HEK293 (cell line): ENCODE measurements at regions of chr11 and their contacts with region 1.

Region 1: GRCh38 chr11:33987975-33988580 is 63.5 kb upstream of the CAPRIN1 start:
- H3K4me3 ChIP-seq: no peak overlapping the region
- H3K27ac ChIP-seq: no peak overlapping the region
- H3K4me1 ChIP-seq: no peaks in the 10 kb centered on the region
- CTCF ChIP-seq: no peak

Region 2: DNA sequence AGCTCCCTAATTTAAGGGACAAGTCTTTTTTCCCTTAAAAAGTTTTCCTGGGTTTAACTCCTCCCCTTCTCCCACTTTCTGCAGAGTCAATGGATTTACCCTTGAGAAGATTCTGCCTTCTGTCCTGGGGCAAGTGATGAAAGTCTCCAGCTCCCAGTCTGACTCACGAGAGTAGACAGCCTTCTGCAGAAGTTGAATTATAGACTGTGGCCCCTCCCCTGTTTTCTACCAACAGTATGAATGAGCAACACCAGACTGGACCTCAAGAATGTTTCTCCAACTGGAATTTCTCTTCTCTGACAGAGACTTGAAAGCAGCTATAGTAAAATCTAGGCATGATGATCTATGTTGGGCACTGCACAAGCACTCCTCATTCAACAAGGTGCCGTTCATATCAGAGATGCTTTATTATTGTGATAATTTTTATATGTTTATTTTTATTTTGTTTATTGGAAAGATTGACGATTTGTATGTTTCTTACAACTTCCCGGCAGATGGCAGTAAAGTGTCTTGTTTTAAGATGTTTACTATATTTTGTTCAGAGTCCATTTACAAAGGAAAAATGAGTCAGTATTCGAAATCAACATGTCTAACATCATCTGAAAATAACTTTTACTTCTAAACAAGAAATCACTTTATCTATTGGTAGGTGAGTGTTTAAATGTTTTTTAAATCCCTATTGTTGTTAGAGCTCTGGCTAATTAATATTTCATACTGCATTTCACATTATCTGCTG is 152.8 kb before region 1 on chr11:
- CTCF ChIA-PET with region 1: interaction called, 34 read pairs
- POLR2A ChIA-PET with region 1: no interaction called
- H3K4me3 ChIP-seq: no peak overlapping the region
- H3K27ac ChIP-seq: no peak overlapping the region
- H3K4me1 ChIP-seq: no peaks in the 10 kb centered on the region
- CTCF ChIP-seq: no peak

Region 3: DNA sequence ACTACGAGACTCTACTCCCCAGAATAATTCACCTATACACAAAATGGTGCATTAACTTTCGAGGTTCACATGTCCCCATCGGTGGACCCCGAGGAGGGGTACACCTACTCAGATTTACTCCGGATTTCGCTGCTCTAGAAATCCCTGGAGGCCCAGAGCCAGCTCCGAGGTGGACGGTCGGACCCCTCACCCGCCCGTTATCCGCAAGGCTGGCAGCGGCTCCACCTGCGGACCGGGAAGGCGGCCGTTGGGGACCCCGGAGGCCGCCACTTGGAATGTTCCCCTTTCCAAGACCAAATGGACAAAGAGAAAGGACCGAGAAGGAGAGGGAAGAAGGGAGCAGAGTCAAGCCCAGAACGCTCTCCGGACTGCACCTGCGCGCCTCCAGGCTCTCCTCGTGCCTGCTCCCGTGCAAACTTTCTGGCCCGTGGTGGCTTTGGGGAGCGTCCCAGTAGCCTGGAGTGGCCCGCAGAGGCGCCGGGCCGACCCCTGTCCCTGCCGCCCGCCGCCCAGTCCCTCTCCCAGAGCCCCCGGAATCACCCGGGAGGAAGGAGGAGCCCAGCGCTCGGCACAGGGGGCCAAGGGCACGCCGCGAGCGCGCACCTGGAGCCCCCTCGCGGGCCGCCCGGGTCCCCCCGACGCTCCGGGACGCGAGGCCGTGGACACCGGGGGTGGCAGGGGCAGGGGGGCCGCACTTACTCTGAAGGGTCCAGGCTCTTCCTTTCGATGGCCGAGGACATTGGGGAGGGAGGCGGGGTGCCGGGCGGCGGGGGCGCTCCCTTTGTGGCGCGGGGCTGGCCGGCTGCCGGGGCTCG is 119.2 kb before region 1 on chr11:
- CTCF ChIA-PET with region 1: interaction called, 23 read pairs
- POLR2A ChIA-PET with region 1: no interaction called
- H3K4me3 ChIP-seq: peak overlapping the region; percentile 46
- H3K27ac ChIP-seq: no peak overlapping the region; the same call in 1 of the 2 replicates
- H3K4me1 ChIP-seq: no peaks in the 10 kb centered on the region
- CTCF ChIP-seq: no peak

Region 4: GRCh38 chr11:33959855-33960400 is 28.1 kb before region 1 on chr11:
- CTCF ChIA-PET with region 1: interaction called, 11 read pairs
- POLR2A ChIA-PET with region 1: no interaction called
- H3K4me3 ChIP-seq: no peak overlapping the region
- H3K27ac ChIP-seq: no peak overlapping the region
- H3K4me1 ChIP-seq: no peaks in the 10 kb centered on the region
- CTCF ChIP-seq: no peak

Region 5: DNA sequence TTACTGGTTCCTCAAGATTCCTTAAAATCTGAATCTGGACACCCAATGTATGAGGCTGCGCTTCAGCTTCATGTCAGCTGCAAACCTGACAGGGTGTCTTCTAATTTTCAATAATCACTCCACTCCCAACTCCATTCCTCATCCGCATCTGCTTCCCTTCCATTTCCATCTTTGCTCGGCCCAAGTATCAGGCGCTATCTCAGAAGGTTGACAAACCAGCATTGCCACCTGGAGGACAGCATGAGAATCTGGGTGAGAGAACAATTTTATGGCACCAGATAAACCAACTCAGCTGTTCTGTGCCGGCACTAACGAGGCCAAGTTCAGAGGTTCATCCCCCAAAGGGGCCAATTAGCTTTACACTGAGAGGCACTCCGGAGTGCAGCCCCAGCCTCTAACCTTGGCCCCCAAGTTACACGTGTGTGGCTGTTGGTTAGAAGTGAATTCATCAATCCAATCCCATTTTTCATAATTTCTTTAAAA is 17.1 kb before region 1 on chr11:
- CTCF ChIA-PET with region 1: interaction called, 25 read pairs
- POLR2A ChIA-PET with region 1: no interaction called
- H3K4me3 ChIP-seq: no peak overlapping the region
- H3K27ac ChIP-seq: no peak overlapping the region
- H3K4me1 ChIP-seq: no peaks in the 10 kb centered on the region
- CTCF ChIP-seq: peak; percentile 37; the same call in 1 of the 2 replicates

Region 6: DNA sequence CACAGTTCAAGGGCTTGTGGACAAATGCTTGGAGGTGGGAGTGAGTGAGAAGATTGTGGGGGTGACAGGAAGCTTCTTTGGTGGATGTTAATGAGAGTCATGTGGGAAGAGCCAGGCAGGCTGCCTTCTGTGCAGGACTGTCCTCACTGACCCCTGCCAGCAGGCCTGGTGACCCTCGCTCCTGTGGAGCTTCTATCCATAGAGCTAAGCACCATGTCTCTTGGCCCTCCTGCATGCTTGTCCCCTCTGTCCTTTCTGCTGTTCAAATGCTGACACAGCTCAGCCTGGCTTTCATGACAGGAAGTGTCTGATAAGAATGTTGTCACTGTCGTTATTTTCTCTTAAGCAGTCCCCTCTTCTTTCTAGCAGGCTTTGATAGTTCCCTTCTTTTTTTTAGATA is 155.0 kb after region 1 on chr11:
- CTCF ChIA-PET with region 1: no interaction called
- POLR2A ChIA-PET with region 1: no interaction called
- H3K4me3 ChIP-seq: no peak overlapping the region
- H3K27ac ChIP-seq: no peak overlapping the region
- H3K4me1 ChIP-seq: no peaks in the 10 kb centered on the region
- CTCF ChIP-seq: no peak